Activated naive CD4-positive, alpha-beta T cell treated with anti-CD3 and anti-CD28 coated beads for 36 hours (primary cell): ENCODE measurements at regions of chr15 and their contacts with region 1.

Region 1: GRCh38 chr15:74889883-74890664 is at the start of gene MPI:
- DNase-seq: peak; percentile 93
- H3K4me3 Mint-ChIP-seq: peak within 1 kb of the TSS; percentile 94
- H3K27ac Mint-ChIP-seq: peak within 1 kb of the TSS; percentile 92
- H3K4me1 Mint-ChIP-seq: peaks cover 43% of the 10 kb centered on the region
- H3K27me3 Mint-ChIP-seq: no peaks in the 10 kb centered on the region
- total RNA-seq, gene MPI: 55.2 to 56.1 TPM

Region 2: GRCh38 chr15:74730619-74731316 is 159.3 kb before region 1 on chr15:
- CTCF ChIA-PET with region 1: no interaction called
- intact Hi-C with region 1: no loop called
- DNase-seq: no peak
- H3K4me3 Mint-ChIP-seq: no peak overlapping the region
- H3K27ac Mint-ChIP-seq: no peak overlapping the region
- H3K4me1 Mint-ChIP-seq: peaks cover 7% of the 10 kb centered on the region
- H3K27me3 Mint-ChIP-seq: peaks cover 20% of the 10 kb centered on the region

Region 3: DNA sequence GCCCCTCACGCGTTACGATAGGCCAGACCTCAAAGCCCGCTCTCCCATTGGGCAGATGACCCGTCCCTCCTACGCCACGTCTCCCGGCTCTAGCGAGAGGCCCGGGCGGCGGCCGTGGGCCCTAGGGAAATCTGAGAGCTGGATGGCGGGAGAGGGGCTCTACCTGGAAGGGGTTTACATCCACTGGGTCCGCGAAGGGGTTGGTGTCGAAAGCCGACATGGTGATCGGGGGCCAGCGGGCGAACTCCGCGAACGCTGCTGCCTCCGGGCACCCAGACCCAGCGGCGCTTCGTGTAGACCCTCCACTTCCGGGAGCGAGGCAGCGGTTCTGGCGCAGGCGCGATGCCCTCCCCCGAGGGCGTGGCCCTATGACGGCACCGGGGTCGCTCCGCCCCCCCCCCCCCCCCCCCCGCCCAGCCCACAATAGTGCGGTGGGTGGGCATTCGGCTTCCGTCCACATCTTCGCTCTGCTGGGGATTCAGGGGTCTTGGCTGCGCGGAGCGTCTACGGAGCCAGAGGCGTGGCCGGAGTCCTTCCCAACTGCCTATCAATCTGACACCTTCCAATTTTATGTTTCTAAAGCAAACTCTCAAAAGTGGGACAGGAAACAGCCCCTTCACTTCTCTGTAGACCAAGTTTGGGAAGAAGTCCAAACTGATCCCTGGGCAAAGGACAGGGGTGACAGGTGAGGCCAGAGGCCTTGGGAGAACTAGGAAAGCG is 16.9 kb before region 1 on chr15 and contains the start of gene SCAMP2:
- CTCF ChIA-PET with region 1: no interaction called
- intact Hi-C with region 1: loop called (anchors 1 kb)
- DNase-seq: peak; percentile 92
- H3K4me3 Mint-ChIP-seq: peak within 1 kb of the TSS; percentile 98
- H3K27ac Mint-ChIP-seq: peak within 1 kb of the TSS; percentile 92
- H3K4me1 Mint-ChIP-seq: peaks cover 42% of the 10 kb centered on the region
- H3K27me3 Mint-ChIP-seq: no peaks in the 10 kb centered on the region
- total RNA-seq, gene SCAMP2: 60.6 TPM